GM10248 (cell line): ENCODE measurements at regions of chr3 and their contacts with region 1.

Region 1: GRCh38 chr3:27712136-27713077 is 9.7 kb downstream of the EOMES start:
- DNase-seq: peak; percentile 85
- CTCF ChIP-seq: peak; percentile 84

Region 2: DNA sequence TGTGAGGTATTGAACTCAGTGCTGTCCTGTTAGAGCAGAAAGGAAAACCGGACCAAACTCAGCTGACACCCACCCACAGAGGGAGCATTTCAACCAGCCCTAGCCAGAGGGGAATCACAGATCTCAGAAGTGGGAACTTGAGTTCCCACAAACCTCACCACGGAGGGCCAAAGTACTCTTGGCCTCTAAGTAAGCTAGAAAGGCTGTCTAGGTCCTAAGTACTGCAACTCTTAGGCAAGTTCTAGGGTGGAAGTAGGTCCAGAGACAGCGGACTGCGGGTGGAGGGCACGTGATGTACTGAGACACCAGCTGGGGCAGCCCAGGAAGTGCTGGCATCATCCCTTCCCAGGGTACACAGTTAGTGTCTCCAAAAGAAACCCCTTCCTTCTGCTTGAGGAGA is 24.4 kb before region 1 on chr3:
- CTCF ChIA-PET with region 1: interaction called, 10 read pairs
- POLR2A ChIA-PET with region 1: no interaction called
- DNase-seq: no peak
- CTCF ChIP-seq: no peak

Region 3: GRCh38 chr3:27728195-27729087 is 16.0 kb after region 1 on chr3:
- CTCF ChIA-PET with region 1: interaction called, 23 read pairs
- POLR2A ChIA-PET with region 1: no interaction called
- DNase-seq: no peak
- CTCF ChIP-seq: no peak

Region 4: DNA sequence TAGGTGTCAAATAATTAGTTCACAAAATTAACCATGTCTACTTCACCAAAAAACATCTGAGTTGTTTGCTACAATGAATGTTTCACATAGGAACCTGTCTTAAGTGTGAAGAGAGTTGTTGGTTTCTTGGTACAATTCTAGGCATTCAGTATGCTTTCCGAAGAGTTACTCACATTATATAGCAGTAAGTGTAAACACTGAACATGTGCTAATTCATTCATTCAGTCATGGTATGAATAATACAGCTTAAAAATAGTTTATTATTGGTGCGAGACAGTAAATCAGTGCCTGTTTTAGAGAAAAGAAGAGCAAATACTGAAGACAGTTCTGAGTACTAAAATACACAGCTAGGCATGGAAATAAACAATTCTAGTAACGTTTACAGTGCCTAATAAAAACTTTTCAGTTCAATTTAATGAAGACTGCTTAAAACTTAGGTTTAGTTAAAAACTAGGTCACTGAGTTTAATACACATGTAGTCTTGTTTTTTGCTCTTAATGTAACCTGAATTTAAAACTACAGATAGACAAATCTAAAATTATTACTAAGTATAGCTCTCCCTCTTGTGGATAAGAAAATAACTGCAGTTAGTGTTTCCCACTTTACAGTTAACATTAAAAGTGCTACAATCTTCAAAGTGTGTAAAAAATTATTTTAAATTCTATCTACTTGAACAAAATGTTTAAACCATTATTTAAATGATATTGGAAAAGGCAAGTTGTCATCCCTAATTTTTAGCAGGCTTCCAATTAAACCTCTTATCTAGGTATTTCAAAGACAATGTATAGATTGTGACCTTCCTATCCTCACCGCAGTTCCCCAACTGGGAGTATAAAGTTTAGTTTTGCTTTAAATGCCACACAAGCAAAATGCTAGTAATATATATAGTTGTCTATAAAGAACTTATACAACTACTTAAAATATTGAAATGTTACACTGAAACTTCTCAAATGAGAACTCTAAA is 616.1 kb after region 1 on chr3:
- CTCF ChIA-PET with region 1: interaction called, 127 read pairs
- POLR2A ChIA-PET with region 1: no interaction called
- DNase-seq: no peak
- CTCF ChIP-seq: peak; percentile 51

Region 5: DNA sequence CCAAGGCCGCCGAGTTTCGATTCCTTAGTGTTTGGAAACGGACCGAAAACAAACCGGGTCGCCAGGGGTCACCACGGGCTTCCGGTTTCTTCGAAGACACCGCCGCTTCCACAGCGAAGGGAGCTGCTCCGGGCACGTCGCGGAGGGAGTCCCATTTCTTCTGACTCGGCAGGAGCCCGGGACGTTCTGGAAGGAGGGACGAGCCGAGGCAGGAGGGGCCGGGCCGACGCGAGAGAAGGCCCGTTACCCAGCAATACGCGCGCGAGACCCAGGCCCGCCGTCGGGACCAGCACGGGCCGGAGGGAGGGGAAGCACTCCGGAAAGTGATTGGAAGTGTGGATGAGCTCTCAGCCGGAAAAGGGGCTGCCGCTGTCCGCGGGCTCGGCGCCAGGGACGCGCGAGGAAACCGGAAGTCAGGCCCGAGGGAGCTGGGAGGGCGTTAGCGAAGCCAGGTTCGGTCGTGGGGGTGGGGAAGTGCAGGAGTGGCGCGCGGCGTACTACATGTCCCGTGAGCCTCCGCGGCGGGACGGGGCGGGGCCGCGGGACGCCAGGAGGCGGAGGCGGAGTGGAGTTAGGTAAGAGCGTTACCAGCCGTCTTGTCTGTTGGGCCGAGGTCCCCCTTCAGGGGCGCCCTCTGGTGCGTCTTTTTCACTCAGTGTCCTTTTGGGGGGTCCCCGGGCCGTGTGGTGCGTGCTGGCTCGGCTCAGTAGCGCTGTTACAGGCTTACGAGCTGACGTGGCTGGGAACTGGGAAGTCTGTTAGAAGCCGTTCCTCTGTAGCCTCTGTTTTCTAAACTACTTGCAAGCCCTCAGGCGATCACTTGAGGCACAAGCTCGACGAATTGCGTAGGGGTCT is 636.4 kb after region 1 on chr3 and contains the starts of genes AZI2 and ZCWPW2:
- CTCF ChIA-PET with region 1: interaction called, 10 read pairs
- POLR2A ChIA-PET with region 1: no interaction called
- DNase-seq: peak; percentile 87
- CTCF ChIP-seq: peak; percentile 16